ENCODE measurements at regions of chr15 and their contacts with region 1.

Region 1: DNA sequence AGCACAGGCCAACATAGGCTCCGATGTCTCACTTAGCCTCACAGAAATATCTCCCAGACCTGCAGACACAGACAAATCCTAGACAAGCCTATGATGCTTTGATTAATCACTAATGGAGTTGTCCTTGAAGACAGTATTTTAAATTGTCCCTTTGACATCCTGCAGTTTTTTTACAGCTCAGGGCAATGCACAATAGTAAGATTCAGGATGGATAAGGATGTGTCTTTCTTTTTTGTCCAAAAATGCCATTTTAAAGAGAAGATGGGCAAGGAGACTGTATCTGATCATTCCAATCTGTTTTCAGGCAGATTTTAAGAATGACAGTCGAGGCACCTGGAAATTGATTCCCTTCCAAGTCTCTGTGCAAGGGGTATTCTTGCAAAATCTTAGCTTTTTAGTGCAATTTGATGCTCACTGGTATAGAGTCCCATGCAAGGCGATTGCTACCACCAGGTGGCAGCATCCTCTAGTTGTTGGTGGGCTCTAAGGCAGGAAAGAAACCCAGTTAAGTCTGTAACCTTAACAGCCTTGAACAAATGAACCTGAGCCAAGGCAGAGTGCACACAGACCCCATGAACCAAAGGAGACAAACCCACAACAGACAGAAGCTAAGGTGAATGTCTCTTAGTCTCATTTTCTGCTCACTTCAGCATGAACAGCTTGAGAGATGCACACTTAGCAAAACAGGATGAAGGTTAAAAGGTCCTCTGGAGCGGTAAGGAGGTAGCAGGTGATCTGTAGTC is 51.2 kb upstream of the MINAR1 start:
- DNase-seq: peak; percentile 47 to 65 (median 59)
- H3K4me3 ChIP-seq: no peak overlapping the region
- H3K4me3 Mint-ChIP-seq: no peak overlapping the region
- H3K27ac ChIP-seq: no peak overlapping the region
- H3K27ac Mint-ChIP-seq: no peak overlapping the region
- H3K4me1 ChIP-seq: no peaks in the 10 kb centered on the region
- H3K4me1 Mint-ChIP-seq: peaks cover 0 to 4% (median 2%) of the 10 kb centered on the region in 4 donors
- H3K27me3 ChIP-seq: no peaks in the 10 kb centered on the region
- H3K27me3 Mint-ChIP-seq: no peaks in the 10 kb centered on the region

Region 2: GRCh38 chr15:78739996-78740903 is 640.7 kb before region 1 on chr15:
- CTCF ChIA-PET with region 1: no interaction called
- POLR2A ChIA-PET with region 1: no interaction called
- intact Hi-C with region 1: no loop called
- DNase-seq: peak; percentile 22 to 61 (median 34)
- H3K4me3 ChIP-seq: no peak overlapping the region
- H3K4me3 Mint-ChIP-seq: no peak overlapping the region
- H3K27ac ChIP-seq: no peak overlapping the region
- H3K27ac Mint-ChIP-seq: no peak overlapping the region
- H3K4me1 ChIP-seq: no peaks in the 10 kb centered on the region
- H3K4me1 Mint-ChIP-seq: peaks cover 0 to 5% (median 1%) of the 10 kb centered on the region in 4 donors
- H3K27me3 ChIP-seq: no peaks in the 10 kb centered on the region
- H3K27me3 Mint-ChIP-seq: peaks cover 2% of the 10 kb centered on the region in 2 donors

Region 3: DNA sequence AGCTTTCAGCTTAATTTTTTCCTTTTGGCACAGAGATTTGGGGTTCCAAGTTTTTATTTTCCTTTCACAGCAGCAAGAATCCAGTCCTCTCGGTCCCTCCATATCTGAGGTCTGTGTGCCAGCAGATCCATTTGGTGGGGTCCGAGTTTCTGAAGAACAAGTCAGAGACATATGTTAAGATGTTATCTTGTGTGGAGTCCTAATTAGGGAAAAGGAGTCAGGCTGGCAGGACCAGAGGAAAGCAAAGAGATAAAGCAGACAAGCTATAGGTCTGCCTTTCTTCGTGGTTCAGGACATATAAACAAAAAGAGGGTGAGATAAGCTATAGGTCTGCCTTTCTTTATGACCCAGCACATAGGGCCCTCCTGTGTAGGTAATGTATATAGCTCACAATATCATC is 15.2 kb before region 1 on chr15:
- CTCF ChIA-PET with region 1: interaction called, 27 read pairs
- POLR2A ChIA-PET with region 1: no interaction called
- intact Hi-C with region 1: no loop called
- DNase-seq: no peak
- H3K4me3 ChIP-seq: no peak overlapping the region
- H3K4me3 Mint-ChIP-seq: no peak overlapping the region
- H3K27ac ChIP-seq: no peak overlapping the region
- H3K27ac Mint-ChIP-seq: no peak overlapping the region
- H3K4me1 ChIP-seq: no peaks in the 10 kb centered on the region
- H3K4me1 Mint-ChIP-seq: no peaks in the 10 kb centered on the region
- H3K27me3 ChIP-seq: no peaks in the 10 kb centered on the region
- H3K27me3 Mint-ChIP-seq: no peaks in the 10 kb centered on the region

Region 4: DNA sequence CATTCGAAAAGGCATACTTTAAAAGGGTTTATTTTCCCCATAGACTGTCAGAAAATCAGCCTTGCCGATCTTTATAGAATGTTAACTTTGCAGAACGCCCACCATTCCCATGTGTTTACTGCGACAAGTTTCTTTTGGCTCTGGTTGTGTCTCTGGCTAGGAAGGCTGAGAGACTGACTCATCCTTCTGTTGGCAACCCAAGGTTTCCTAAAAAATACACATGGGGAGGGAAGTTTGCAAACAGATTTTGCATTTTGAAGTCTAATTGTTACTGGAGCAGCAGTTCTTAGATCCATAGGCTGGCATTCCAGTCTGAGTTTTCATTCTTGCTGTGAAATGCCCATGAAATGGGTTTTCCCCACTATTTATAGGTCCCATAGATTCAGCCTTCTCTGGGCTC is 13.3 kb after region 1 on chr15:
- CTCF ChIA-PET with region 1: interaction called, 27 read pairs
- POLR2A ChIA-PET with region 1: no interaction called
- intact Hi-C with region 1: no loop called
- DNase-seq: no peak
- H3K4me3 ChIP-seq: no peak overlapping the region
- H3K4me3 Mint-ChIP-seq: no peak overlapping the region
- H3K27ac ChIP-seq: no peak overlapping the region
- H3K27ac Mint-ChIP-seq: no peak overlapping the region
- H3K4me1 ChIP-seq: no peaks in the 10 kb centered on the region
- H3K4me1 Mint-ChIP-seq: no peaks in the 10 kb centered on the region
- H3K27me3 ChIP-seq: no peaks in the 10 kb centered on the region
- H3K27me3 Mint-ChIP-seq: peaks cover 0 to 2% of the 10 kb centered on the region in 2 donors

Measured in CD4-positive, alpha-beta memory T cell (primary cell).